ENCODE measurements at regions of chr2 and their contacts with region 1.

Region 1: GRCh38 chr2:132977812-132978529 is 308.0 kb upstream of the LYPD1 start:
- DNase-seq: peak; percentile 94
- H3K4me3 ChIP-seq: no peak overlapping the region
- H3K27ac ChIP-seq: no peak overlapping the region
- H3K4me1 ChIP-seq: peaks cover 48% of the 10 kb centered on the region
- H3K27me3 ChIP-seq: no peaks in the 10 kb centered on the region
- CTCF ChIP-seq: no peak

Region 2: DNA sequence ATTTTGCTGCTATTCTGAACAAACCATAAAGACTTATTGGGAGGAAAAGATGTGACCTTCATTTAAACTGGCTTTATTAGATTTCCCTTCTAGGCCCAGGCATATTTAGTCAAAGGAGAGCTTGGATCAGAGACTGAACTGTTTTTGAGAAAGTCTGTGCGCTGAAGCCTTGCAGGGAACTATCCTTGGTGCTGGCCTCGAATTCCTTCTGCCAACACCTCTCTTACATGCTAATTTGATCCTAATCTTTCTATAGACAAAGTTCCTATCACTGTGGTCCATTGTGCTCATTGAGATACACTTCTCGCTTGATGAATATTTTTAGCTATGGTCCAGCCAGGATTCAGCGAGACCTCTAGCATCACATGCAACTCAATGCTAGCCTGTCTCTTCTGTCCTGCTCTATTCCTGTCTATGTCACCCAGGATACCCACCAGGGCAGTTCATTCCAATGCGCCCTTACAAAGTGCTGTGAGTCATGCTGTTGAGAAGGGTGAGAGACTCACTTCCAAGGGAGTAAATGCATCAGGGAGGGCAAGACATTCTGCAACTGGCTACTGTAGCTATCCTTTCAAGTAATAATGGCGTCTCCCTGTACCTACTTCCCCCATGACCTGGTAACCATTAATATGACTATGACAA is 48.7 kb after region 1 on chr2:
- CTCF ChIA-PET with region 1: no interaction called
- POLR2A ChIA-PET with region 1: interaction called, 16 read pairs
- intact Hi-C with region 1: no loop called
- DNase-seq: peak; percentile 22
- H3K4me3 ChIP-seq: no peak overlapping the region
- H3K27ac ChIP-seq: no peak overlapping the region
- H3K4me1 ChIP-seq: peaks cover 3% of the 10 kb centered on the region
- H3K27me3 ChIP-seq: no peaks in the 10 kb centered on the region
- CTCF ChIP-seq: no peak

Measured in A673 (cell line).